ENCODE measurements at regions of chr7 and their contacts with region 1.

Region 1: DNA sequence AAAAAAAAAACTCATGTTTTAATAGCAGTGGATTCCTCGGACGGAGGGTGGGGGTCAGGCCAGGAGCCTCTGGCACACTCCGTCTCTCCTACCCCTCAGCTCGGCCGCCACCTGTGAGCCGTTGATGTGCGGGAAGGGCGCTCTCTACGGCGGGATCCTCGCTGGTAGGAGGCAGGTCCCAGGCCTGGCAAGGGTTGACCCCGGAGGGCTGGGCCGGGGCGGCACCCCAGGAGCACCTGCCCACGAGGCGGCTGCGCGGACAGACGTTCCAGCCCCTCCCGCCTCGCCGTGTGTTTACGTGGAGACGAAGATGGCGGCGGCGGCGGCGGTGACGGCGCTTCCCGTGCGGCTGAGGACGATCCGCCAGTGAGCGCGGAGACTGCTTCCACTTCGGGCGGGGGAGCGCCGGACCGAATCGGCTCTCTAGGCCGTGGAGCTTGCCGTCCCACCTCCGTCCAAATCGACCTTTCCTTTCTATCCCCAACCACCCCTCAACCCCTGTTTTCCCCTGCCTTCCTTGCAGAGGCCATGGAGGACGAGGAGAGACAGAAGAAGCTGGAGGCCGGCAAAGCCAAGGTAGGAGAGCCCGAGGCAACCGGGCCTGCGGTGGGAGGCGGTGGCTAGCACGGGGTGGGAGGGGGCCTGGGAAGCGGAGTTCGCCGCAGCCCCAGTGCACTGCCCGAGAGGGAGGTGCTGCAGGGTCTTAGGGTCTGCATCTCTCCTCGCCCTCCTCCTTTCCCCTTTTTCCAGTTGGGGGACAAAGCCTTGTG is at the start of gene AKAP9:
- DNase-seq: peak; percentile 92
- H3K4me3 ChIP-seq: peak within 1 kb of the TSS; percentile 71 to 93 (median 82)
- H3K27ac ChIP-seq: peak within 1 kb of the TSS; percentile 93 to 96 (median 94)
- H3K4me1 ChIP-seq: peaks cover 0 to 34% (median 26%) of the 10 kb centered on the region in 4 donors
- H3K27me3 ChIP-seq: no peaks in the 10 kb centered on the region
- CTCF ChIP-seq: no peak
- EP300 ChIP-seq: no peak
- POLR2A ChIP-seq: peak; percentile 48 to 58
- total RNA-seq, gene AKAP9: 48.1 to 78.7 (median 59.3) TPM

Region 2: GRCh38 chr7:90605055-90605454 is 1335.7 kb before region 1 on chr7:
- intact Hi-C with region 1: loop called (anchors 5 kb)
- DNase-seq: no peak
- H3K4me3 ChIP-seq: no peak overlapping the region
- H3K27ac ChIP-seq: no peak overlapping the region
- H3K4me1 ChIP-seq: peaks cover 0 to under 1% (median 0%) of the 10 kb centered on the region in 4 donors
- H3K27me3 ChIP-seq: no peaks in the 10 kb centered on the region
- CTCF ChIP-seq: no peak
- EP300 ChIP-seq: no peak
- POLR2A ChIP-seq: no peak

Region 3: DNA sequence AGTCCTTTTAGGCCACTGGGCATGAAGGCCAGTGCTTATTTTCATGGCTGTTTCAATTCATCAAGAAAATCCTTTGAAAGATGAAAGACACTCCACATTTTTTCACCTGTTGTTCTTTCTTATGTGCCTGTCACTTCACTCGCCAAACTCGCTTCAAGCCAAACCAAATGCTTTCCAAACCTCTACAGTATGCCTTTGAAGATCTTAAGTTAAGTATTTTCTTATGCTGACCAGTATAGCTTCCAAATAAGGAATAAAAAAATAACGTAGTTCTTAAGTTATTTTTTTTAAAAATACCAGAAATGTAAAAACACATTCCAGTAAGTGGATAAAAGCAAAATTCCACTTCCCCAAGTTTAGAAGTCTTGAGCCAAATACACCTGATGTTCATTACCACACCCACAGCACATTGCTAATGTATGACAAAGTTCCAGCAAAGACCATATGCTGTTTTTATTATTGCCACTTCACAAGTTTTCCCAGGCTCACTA is 246.4 kb before region 1 on chr7:
- intact Hi-C with region 1: no loop called
- DNase-seq: no peak
- H3K4me3 ChIP-seq: no peak overlapping the region
- H3K27ac ChIP-seq: peak overlapping the region in 3 of 4 donors; percentile 60 to 69 (median 65)
- H3K4me1 ChIP-seq: peaks cover 0 to 58% (median 42%) of the 10 kb centered on the region in 4 donors
- H3K27me3 ChIP-seq: no peaks in the 10 kb centered on the region
- CTCF ChIP-seq: no peak
- EP300 ChIP-seq: no peak
- POLR2A ChIP-seq: no peak

Region 4: DNA sequence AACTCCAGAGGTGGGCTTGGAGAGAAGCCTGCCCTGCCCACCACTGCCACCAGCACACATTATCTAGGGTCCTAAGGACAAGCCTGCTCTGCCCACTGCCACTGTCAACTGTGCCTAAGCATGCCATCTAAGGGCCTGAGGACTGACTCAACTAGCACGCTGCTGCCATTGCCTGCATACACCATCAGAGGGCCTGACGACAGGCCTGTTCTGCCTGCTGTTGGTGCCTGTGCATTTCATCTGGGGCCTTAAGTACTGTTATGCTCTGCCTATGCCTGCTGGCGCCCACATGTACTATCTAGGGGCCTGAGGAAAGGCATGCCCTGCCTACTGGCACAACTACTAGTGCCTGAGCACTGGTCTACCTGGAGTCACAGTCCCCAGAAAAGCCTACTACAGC is 265.3 kb after region 1 on chr7:
- intact Hi-C with region 1: no loop called
- DNase-seq: no peak
- H3K4me3 ChIP-seq: no peak overlapping the region
- H3K27ac ChIP-seq: no peak overlapping the region
- H3K4me1 ChIP-seq: no peaks in the 10 kb centered on the region
- H3K27me3 ChIP-seq: no peaks in the 10 kb centered on the region
- CTCF ChIP-seq: no peak
- EP300 ChIP-seq: no peak
- POLR2A ChIP-seq: no peak